ENCODE measurements at regions of chr5 and their contacts with region 1.

Region 1: DNA sequence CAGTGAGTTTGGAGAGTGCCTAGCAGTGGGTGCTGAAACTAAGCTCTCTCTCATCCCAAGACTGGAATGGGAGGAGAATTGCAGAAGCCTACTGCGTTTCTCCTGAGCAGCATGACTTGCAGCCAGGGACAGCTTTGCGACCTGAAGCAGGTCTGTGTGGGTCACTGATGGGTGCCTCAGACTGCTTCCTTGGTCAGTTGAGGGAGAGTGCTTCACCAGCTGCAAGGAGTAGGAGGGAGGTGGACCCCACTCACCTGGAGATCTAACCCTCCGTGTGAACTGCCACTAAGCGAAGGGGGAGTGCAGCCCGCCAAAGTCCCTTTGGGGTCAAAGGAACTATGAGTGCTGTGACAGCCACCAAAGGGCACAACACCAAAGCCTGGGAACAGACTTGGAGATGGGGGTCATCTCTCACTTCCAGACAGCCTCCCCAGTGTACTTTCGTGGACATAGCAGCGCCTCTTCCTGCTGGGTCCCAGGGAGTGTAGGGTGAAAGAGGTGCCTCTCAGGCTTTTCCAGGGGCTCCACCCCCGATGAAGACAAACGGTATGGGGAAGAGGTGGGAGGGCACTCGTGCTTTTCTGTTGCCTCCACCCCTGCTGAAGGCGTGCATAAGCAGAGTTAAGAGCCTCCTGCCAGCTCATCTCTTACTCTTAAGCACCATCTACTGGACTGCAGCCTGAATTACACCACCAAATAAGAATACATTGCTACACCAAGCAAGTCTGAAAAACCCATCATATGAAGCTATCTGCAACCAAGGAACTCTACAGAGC is 34.3 kb upstream of the MACIR start:
- DNase-seq: peak; percentile 71 to 92 (median 91)
- H3K4me3 ChIP-seq: peak overlapping the region in 2 of 7 experiments; percentile 28 to 46
- H3K27ac ChIP-seq: no peak overlapping the region
- H3K4me1 ChIP-seq: peaks cover 0 to 4% (median under 1%) of the 10 kb centered on the region in 4 experiments
- H3K27me3 ChIP-seq: no peaks in the 10 kb centered on the region

Region 2: DNA sequence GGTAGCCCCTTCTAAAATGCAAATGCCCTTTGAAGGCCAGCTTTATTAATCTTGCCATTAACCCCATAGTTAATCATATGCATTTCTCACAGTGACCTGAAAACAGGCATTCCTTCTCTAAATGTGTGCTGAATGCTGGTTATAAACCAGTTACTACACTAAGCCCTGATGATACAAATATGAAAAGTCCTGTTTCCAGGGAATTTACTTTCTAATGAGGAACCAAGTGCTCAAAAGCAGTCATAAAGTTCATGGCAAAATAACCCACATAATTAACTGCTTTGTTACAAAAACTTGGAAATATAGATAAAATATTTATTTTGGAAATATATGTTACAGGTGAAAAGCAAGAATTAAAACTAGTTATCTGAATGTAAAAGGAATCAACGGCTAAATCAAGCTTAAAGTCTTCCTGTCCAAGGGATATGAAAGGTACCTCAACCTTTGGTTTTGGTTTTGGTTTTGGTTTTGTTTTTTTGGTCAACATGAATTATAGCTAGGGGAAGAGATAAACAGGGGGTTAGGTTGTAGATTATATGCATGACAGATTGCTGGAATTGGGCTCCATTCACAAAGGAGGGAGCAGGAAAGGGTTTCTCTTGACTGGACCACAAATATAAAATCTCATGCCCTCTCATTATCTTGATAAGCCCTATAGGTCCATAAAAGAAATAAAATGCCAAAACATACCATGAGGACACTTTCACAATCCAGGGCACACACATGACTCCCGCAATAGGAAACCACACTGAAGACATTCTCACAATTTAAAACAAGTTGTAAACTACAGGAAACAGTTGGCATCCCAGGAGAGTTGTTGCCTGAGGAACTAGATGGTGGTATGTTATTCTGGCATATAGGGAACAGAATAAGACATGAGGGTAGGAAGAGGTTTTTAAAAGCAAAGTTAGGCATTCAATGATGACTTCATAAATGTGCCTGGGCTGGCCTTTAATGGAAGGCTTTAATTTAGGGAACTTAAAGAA is 12.4 kb before region 1 on chr5:
- CTCF ChIA-PET with region 1: interaction called, 28 read pairs
- POLR2A ChIA-PET with region 1: interaction called, 5 read pairs
- DNase-seq: peak; percentile 58 to 92 (median 87)
- H3K4me3 ChIP-seq: peak overlapping the region in 4 of 7 experiments; percentile 28 to 65 (median 40)
- H3K27ac ChIP-seq: peak overlapping the region in 1 of 2 experiments; percentile 52
- H3K4me1 ChIP-seq: peaks cover 14 to 45% (median 31%) of the 10 kb centered on the region in 4 experiments
- H3K27me3 ChIP-seq: no peaks in the 10 kb centered on the region

Region 3: DNA sequence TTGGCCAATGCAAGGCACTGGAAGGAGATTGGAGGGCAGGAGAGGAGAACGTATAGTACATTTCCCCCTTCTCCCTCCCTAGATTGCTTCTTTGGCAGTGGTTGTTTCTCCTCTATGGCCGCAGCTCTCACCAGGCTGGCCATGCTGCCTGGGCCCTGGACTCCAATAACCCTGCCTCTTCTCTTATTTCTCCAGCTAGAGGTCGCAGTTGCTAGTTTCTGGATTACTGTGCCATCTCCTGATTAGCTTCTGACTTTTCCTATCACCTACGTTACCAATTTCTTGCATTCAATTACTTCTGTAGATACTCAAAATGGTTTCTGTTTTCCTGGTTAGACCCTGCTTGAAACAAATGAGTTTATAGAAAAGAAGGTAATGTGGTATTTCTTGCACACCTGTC is 31.9 kb after region 1 on chr5:
- CTCF ChIA-PET with region 1: interaction called, 12 read pairs
- POLR2A ChIA-PET with region 1: no interaction called
- DNase-seq: no peak
- H3K4me3 ChIP-seq: no peak overlapping the region
- H3K27ac ChIP-seq: no peak overlapping the region
- H3K4me1 ChIP-seq: peaks cover 9 to 21% (median 15%) of the 10 kb centered on the region in 4 experiments
- H3K27me3 ChIP-seq: no peaks in the 10 kb centered on the region